Posterior vena cava (tissue), 2 donors: ENCODE measurements at regions of chr3 and their contacts with region 1.

Region 1: DNA sequence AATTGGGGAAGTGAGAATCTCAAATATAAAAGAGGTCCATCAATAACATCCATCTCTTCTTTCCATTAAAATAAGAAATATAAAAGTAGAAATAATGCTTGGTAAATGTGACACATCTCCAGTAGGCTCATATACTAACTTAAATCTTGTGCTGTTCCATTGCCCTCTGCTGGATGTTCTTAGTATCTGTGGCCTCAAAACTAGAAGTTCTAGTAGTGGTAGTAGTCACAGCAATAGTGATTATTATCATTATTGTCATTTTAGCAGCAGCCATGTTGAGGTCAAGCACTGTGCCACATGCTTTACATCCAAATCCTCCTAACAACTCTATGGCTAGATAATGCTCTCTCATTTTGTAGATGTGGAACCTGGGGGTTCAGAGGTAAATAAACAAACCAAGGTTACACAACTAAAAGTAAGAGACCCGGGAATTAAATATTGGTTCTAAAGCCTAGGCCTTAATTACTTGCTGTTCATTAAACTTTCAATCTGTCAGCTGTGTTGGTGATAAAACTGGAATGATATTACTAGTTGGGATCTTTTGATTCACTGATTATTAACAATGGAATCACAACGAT is 20.2 kb upstream of the BTLA start:
- DNase-seq: no peak

Region 2: DNA sequence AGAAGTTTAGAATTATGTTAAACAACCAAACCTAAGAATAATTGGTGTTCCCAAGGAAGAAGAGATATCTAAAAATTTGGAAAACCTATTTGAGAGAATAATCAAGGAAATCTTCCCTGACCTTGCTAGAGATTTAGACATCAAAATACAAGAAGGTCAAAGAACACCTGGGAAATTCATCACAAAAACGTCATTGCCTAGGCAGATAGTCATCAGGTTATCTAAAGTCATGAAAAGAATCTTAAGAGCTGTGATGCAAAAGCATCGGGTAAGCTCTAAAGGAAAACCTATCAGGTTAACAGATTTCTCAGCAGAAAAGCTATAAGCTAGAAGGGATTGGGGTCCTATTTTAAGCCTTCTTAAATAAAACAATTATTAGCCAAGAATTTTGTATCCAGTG is 1111.5 kb before region 1 on chr3:
- intact Hi-C with region 1: no loop called
- DNase-seq: no peak

Region 3: GRCh38 chr3:111794711-111795110 is 724.8 kb before region 1 on chr3:
- intact Hi-C with region 1: no loop called
- DNase-seq: no peak

Region 4: DNA sequence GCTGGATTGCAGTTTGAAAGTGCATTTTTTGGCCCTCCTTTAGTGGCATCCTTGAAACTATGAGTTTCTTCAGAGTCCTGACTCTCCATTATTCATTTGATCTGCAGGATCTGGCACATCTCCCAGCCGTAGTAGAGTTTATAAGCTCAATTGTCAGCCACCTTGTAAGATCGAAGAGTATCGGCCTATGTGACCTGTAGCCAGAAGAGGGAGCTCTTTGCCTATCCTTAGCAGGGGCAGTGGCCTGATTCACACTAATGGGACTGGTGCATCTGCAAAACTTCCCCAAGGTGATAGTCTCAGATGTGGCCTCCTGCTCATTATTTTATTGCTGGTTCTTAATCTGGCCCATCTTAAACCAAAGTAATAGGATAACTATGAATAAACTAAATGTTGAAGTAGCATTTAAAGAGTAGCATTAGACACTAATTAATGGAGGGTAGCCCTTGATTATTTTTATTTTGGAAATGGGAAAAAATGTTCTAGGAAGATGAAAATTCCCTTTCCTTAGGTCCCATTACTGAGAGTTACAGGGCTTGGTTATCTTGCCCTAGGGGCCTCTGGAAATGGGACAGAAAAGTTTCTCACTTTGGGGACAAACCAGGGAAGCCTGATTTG is 407.6 kb before region 1 on chr3:
- intact Hi-C with region 1: loop called in 1 of 2 experiments (anchors 10 kb)
- DNase-seq: no peak

Region 5: GRCh38 chr3:112293368-112294321 is 225.9 kb before region 1 on chr3 and contains the start of gene SLC9C1:
- intact Hi-C with region 1: loop called in 1 of 2 experiments (anchors 10 kb)
- DNase-seq: no peak
- total RNA-seq, gene SLC9C1: 0.29 to 1.4 TPM

Region 6: GRCh38 chr3:112327371-112327951 is 192.1 kb before region 1 on chr3:
- intact Hi-C with region 1: loop called (anchors 5 kb)
- DNase-seq: no peak